Naive thymus-derived CD4-positive, alpha-beta T cell (primary cell): ENCODE measurements at regions of chr12 and their contacts with region 1.

Region 1: GRCh38 chr12:132866251-132866828 is 21.1 kb downstream of the CHFR start:
- DNase-seq: no peak
- ATAC-seq: no peak
- H3K4me3 ChIP-seq: no peak overlapping the region
- H3K4me3 Mint-ChIP-seq: peak overlapping the region in 7 of 10 donors; percentile 48 to 85 (median 77)
- H3K27ac ChIP-seq: peak overlapping the region; percentile 71
- H3K27ac Mint-ChIP-seq: peak overlapping the region; percentile 81 to 99 (median 95)
- H3K4me1 ChIP-seq: peaks cover 0 to 25% of the 10 kb centered on the region in 2 donors
- H3K4me1 Mint-ChIP-seq: peaks cover 10 to 39% (median 23%) of the 10 kb centered on the region in 7 donors
- H3K27me3 ChIP-seq: no peaks in the 10 kb centered on the region
- H3K27me3 Mint-ChIP-seq: no peaks in the 10 kb centered on the region

Region 2: GRCh38 chr12:132834181-132834711 is 32.1 kb before region 1 on chr12:
- CTCF ChIA-PET with region 1: interaction called, 3 read pairs
- POLR2A ChIA-PET with region 1: interaction called, 8 read pairs
- intact Hi-C with region 1: loop called in 1 of 2 experiments (anchors 1 kb)
- DNase-seq: peak in 7 of 9 donors; percentile 32 to 60 (median 48)
- ATAC-seq: peak; percentile 67
- H3K4me3 ChIP-seq: no peak overlapping the region
- H3K4me3 Mint-ChIP-seq: peak overlapping the region; percentile 69 to 87 (median 79)
- H3K27ac ChIP-seq: peak overlapping the region; percentile 69
- H3K27ac Mint-ChIP-seq: peak overlapping the region; percentile 80 to 98 (median 95)
- H3K4me1 ChIP-seq: peaks cover 4 to 30% of the 10 kb centered on the region in 2 donors
- H3K4me1 Mint-ChIP-seq: peaks cover 23 to 54% (median 46%) of the 10 kb centered on the region in 7 donors
- H3K27me3 ChIP-seq: no peaks in the 10 kb centered on the region
- H3K27me3 Mint-ChIP-seq: no peaks in the 10 kb centered on the region

Region 3: DNA sequence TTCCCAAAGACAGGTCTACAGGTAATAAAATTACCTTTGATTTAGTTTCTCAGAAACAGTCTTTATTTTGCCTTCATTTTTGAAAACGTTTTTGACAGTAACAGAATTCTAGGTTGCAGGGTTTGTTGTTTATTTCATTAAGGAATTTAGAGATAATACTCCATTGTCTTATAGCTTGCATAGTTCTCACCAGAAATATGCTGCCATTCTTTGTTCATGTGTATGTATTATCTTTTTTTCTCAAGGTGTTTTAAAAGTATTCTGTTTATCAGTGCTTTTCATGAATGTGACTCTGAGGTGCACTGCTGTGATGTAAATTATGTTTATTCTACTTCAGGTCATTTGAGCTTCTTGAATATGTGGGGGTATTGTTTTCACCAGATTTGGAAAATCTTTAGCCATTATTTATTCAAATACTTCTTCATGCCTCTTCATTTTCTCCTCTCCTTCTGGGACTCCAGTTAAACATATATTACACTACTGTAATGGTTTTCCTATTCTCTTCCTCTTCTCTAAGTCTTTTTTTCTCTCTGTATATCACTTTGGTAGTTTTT is 57.1 kb after region 1 on chr12:
- CTCF ChIA-PET with region 1: no interaction called
- POLR2A ChIA-PET with region 1: no interaction called
- intact Hi-C with region 1: no loop called
- DNase-seq: no peak
- ATAC-seq: no peak
- H3K4me3 ChIP-seq: no peak overlapping the region
- H3K4me3 Mint-ChIP-seq: no peak overlapping the region
- H3K27ac ChIP-seq: no peak overlapping the region
- H3K27ac Mint-ChIP-seq: no peak overlapping the region
- H3K4me1 ChIP-seq: no peaks in the 10 kb centered on the region
- H3K4me1 Mint-ChIP-seq: no peaks in the 10 kb centered on the region
- H3K27me3 ChIP-seq: no peaks in the 10 kb centered on the region
- H3K27me3 Mint-ChIP-seq: no peaks in the 10 kb centered on the region